ENCODE measurements at regions of chr11 and their contacts with region 1.

Region 1: GRCh38 chr11:34357701-34358257 is at the start of gene ABTB2:
- DNase-seq: peak; percentile 99
- ATAC-seq: peak; percentile 88 to 93 (median 90)
- H3K4me3 ChIP-seq: peak within 1 kb of the TSS; percentile 88
- H3K27ac ChIP-seq: peak within 1 kb of the TSS; percentile 91
- H3K4me1 ChIP-seq: peaks cover 31% of the 10 kb centered on the region
- H3K27me3 ChIP-seq: peaks cover 0 to 5% (median 0%) of the 10 kb centered on the region in 3 donors
- CTCF ChIP-seq: no peak
- total RNA-seq, gene ABTB2: 11.9 to 24.7 (median 20.0) TPM

Region 2: GRCh38 chr11:33996498-33997454 is 361.0 kb before region 1 on chr11:
- intact Hi-C with region 1: loop called (anchors 1 to 5 kb)
- DNase-seq: peak; percentile 50 to 64
- ATAC-seq: peak; percentile 96 to 99 (median 98)
- H3K4me3 ChIP-seq: no peak overlapping the region
- H3K27ac ChIP-seq: no peak overlapping the region
- H3K4me1 ChIP-seq: peaks cover 4% of the 10 kb centered on the region
- H3K27me3 ChIP-seq: no peaks in the 10 kb centered on the region
- CTCF ChIP-seq: peak; percentile 85

Region 3: GRCh38 chr11:34105079-34105956 is 252.5 kb before region 1 on chr11 and contains the start of gene NAT10:
- intact Hi-C with region 1: loop called in 1 of 2 experiments (anchors 2 kb)
- DNase-seq: peak; percentile 97 to 99
- ATAC-seq: peak; percentile 94 to 98 (median 97)
- H3K4me3 ChIP-seq: peak within 1 kb of the TSS; percentile 91
- H3K27ac ChIP-seq: peak within 1 kb of the TSS; percentile 96
- H3K4me1 ChIP-seq: peaks cover 26% of the 10 kb centered on the region
- H3K27me3 ChIP-seq: no peaks in the 10 kb centered on the region
- CTCF ChIP-seq: peak; percentile 16
- total RNA-seq, gene NAT10: 26.7 to 51.5 (median 37.0) TPM

Region 4: DNA sequence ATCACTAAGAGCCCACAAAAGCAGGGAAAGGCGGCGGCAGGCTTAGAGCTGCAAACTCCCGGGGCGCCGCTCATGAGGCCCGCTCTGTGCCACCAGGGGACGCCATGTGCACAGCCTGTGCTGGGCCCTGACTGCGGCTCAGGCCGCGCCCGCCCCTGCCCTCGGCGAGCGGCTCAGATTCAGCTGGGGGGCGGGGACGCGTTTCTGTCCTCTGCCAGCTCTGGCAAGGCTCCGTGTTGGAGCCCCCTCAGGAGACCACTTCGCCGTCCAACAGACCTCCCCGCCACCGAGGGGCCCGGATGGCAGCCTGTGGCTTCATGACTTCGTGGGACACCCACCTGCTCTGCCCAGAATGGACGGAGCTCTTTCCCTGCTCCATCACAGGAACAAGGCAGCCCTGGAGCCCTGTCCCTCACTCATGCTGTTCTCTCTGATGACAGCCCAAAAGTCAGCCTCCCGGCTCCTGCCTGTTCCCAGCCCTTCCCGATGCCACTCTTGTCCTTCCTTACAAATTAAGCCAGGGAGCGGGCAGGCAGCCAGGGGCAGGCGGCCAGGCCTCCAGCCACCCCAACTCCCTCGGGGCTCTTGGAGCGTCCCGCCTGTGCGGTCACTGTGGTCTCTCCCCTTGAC is 183.3 kb before region 1 on chr11:
- intact Hi-C with region 1: loop called (anchors 1 kb)
- DNase-seq: peak; percentile 85 to 92
- ATAC-seq: peak; percentile 98 to 99 (median 98)
- H3K4me3 ChIP-seq: peak overlapping the region; percentile 58
- H3K27ac ChIP-seq: peak overlapping the region; percentile 19
- H3K4me1 ChIP-seq: peaks cover 7% of the 10 kb centered on the region
- H3K27me3 ChIP-seq: no peaks in the 10 kb centered on the region
- CTCF ChIP-seq: peak; percentile 96

Region 5: GRCh38 chr11:34250732-34251639 is 106.8 kb before region 1 on chr11:
- intact Hi-C with region 1: loop called in 1 of 2 experiments (anchors 5 kb)
- DNase-seq: peak; percentile 73 to 91
- ATAC-seq: peak; percentile 98 to 99 (median 98)
- H3K4me3 ChIP-seq: peak overlapping the region; percentile 51
- H3K27ac ChIP-seq: peak overlapping the region; percentile 86
- H3K4me1 ChIP-seq: peaks cover 44% of the 10 kb centered on the region
- H3K27me3 ChIP-seq: no peaks in the 10 kb centered on the region
- CTCF ChIP-seq: no peak

Region 6: GRCh38 chr11:34274723-34275401 is 82.9 kb before region 1 on chr11:
- intact Hi-C with region 1: loop called in 1 of 2 experiments (anchors 10 kb)
- DNase-seq: peak; percentile 87 to 91
- ATAC-seq: peak; percentile 87 to 92 (median 90)
- H3K4me3 ChIP-seq: no peak overlapping the region
- H3K27ac ChIP-seq: peak overlapping the region; percentile 71
- H3K4me1 ChIP-seq: peaks cover 27% of the 10 kb centered on the region
- H3K27me3 ChIP-seq: no peaks in the 10 kb centered on the region
- CTCF ChIP-seq: no peak

Region 7: DNA sequence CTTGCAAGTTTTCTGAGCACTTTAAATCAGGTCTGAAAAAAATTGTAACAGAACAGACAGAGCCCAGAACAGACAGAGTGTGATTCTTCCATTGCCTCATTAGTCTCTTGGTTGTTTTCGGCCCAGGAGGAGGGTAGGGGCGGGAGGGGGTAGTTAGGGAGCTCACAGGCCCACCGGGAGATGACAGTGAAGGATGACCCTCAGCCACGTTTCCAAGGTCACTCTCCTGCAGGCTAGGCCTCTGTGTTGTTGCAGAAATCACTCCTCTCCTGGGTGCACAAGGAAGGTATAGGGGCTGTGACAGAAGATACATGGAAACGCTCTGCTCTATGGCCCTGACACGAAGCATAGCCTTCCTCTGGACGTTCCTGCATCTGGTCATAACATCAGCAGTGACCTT is 69.3 kb before region 1 on chr11:
- intact Hi-C with region 1: no loop called
- DNase-seq: no peak
- ATAC-seq: no peak
- H3K4me3 ChIP-seq: no peak overlapping the region
- H3K27ac ChIP-seq: no peak overlapping the region
- H3K4me1 ChIP-seq: peaks cover 19% of the 10 kb centered on the region
- H3K27me3 ChIP-seq: no peaks in the 10 kb centered on the region
- CTCF ChIP-seq: no peak

Region 8: GRCh38 chr11:34313099-34313517 is 44.7 kb before region 1 on chr11:
- intact Hi-C with region 1: loop called in 1 of 2 experiments (anchors 2 kb)
- DNase-seq: peak; percentile 58 to 74
- ATAC-seq: peak; percentile 61 to 91 (median 80)
- H3K4me3 ChIP-seq: no peak overlapping the region
- H3K27ac ChIP-seq: peak overlapping the region; percentile 94
- H3K4me1 ChIP-seq: peaks cover 86% of the 10 kb centered on the region
- H3K27me3 ChIP-seq: no peaks in the 10 kb centered on the region
- CTCF ChIP-seq: no peak